ENCODE measurements at regions of chr9 and their contacts with region 1.

Region 1: DNA sequence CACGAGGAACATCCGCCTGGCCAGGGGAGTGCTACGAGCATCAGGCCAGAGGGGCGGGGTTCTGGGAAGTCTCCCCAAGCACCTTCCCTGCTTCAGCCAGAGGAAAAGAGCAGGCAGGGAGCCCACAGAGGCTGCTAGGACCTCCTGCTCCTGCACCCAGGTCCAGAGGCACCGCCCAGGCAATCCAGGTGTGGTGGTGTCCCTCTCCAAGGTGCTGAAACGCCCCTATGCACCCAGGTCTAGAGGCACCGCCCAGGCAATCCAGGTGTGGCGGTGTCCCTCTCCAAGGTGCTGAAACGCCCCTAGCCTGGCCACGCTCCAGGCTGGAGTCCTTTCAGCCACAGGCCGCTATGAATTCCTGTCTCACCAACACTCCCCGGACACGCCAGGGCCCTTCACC is 10.7 kb upstream of the UBAC1 start:
- DNase-seq: peak in 1 of 2 experiments; percentile 38
- ATAC-seq: peak; percentile 26 to 30; a peak in 4 of 6 replicates
- H3K4me3 ChIP-seq: no peak overlapping the region
- H3K27ac ChIP-seq: no peak overlapping the region
- H3K4me1 ChIP-seq: peaks cover 9% of the 10 kb centered on the region; the same call in 1 of the 3 replicates
- CTCF ChIP-seq: no peak
- EP300 ChIP-seq: no peak
- POLR2A ChIP-seq: no peak
- RAD21 ChIP-seq: no peak

Region 2: GRCh38 chr9:135574331-135574730 is 397.6 kb before region 1 on chr9:
- CTCF ChIA-PET with region 1: no interaction called
- POLR2A ChIA-PET with region 1: no interaction called
- DNase-seq: no peak
- ATAC-seq: no peak
- H3K4me3 ChIP-seq: no peak overlapping the region
- H3K27ac ChIP-seq: no peak overlapping the region
- H3K4me1 ChIP-seq: no peaks in the 10 kb centered on the region
- CTCF ChIP-seq: no peak
- EP300 ChIP-seq: no peak
- POLR2A ChIP-seq: no peak
- RAD21 ChIP-seq: no peak

Region 3: DNA sequence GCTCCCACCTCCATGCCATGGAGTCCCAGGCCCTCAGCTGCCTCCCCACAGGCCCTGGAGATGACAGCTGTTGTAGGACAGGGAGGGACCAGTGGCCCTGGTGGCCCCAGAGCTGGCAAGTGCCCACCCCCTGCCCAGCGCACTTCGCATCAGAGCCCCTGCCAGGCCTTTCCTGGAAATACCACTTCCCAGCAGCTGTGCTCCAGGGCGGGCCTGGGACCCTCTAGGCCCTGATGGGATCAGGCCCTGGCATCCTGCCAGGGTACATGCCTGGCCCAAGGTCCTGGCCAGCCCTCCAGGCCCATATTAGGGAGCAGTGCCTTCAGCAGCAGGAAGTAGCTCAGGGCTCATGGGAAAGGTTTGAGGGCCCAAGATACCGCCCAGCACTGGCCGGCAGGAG is 267.4 kb before region 1 on chr9:
- CTCF ChIA-PET with region 1: no interaction called
- POLR2A ChIA-PET with region 1: no interaction called
- DNase-seq: no peak
- ATAC-seq: no peak
- H3K4me3 ChIP-seq: no peak overlapping the region
- H3K27ac ChIP-seq: no peak overlapping the region
- H3K4me1 ChIP-seq: peaks cover 9% of the 10 kb centered on the region; the same call in 2 of the 3 replicates
- CTCF ChIP-seq: no peak
- EP300 ChIP-seq: no peak
- POLR2A ChIP-seq: no peak
- RAD21 ChIP-seq: no peak

Region 4: GRCh38 chr9:135743546-135744332 is 228.2 kb before region 1 on chr9:
- CTCF ChIA-PET with region 1: no interaction called
- POLR2A ChIA-PET with region 1: no interaction called
- DNase-seq: no peak
- ATAC-seq: no peak
- H3K4me3 ChIP-seq: no peak overlapping the region
- H3K27ac ChIP-seq: no peak overlapping the region
- H3K4me1 ChIP-seq: no peaks in the 10 kb centered on the region
- CTCF ChIP-seq: no peak
- EP300 ChIP-seq: no peak
- POLR2A ChIP-seq: no peak
- RAD21 ChIP-seq: no peak

Region 5: GRCh38 chr9:135986605-135987004 is 14.7 kb after region 1 on chr9:
- CTCF ChIA-PET with region 1: interaction called, 22 read pairs
- POLR2A ChIA-PET with region 1: interaction called, 5 read pairs
- DNase-seq: no peak
- ATAC-seq: no peak
- H3K4me3 ChIP-seq: no peak overlapping the region
- H3K27ac ChIP-seq: no peak overlapping the region
- H3K4me1 ChIP-seq: 0 out of 3 replicates have a peak, but pooled peaks cover 8% of the 10 kb centered on the region
- CTCF ChIP-seq: no peak
- EP300 ChIP-seq: no peak
- POLR2A ChIP-seq: no peak
- RAD21 ChIP-seq: no peak

Region 6: GRCh38 chr9:136051517-136052432 is 79.9 kb after region 1 on chr9:
- CTCF ChIA-PET with region 1: interaction called, 44 read pairs
- POLR2A ChIA-PET with region 1: interaction called, 3 read pairs
- DNase-seq: peak; percentile 90 to 98
- ATAC-seq: peak; percentile 70 to 84
- H3K4me3 ChIP-seq: peak overlapping the region; percentile 84
- H3K27ac ChIP-seq: peak overlapping the region; percentile 99
- H3K4me1 ChIP-seq: peaks cover 73% of the 10 kb centered on the region
- CTCF ChIP-seq: no peak
- EP300 ChIP-seq: peak; percentile 31 to 51; a peak in 2 of 5 replicates
- POLR2A ChIP-seq: peak; percentile 20; the same call in 1 of the 2 replicates
- RAD21 ChIP-seq: peak in 1 of 2 experiments; percentile 11; a peak in 2 of 5 replicates

Region 7: GRCh38 chr9:136093995-136094881 is 122.3 kb after region 1 on chr9:
- CTCF ChIA-PET with region 1: interaction called, 33 read pairs
- POLR2A ChIA-PET with region 1: no interaction called
- DNase-seq: peak; percentile 81 to 90
- ATAC-seq: peak; percentile 61 to 81
- H3K4me3 ChIP-seq: peak overlapping the region; percentile 79
- H3K27ac ChIP-seq: peak overlapping the region; percentile 92 to 94
- H3K4me1 ChIP-seq: peaks cover 54% of the 10 kb centered on the region
- CTCF ChIP-seq: no peak
- EP300 ChIP-seq: no peak
- POLR2A ChIP-seq: no peak
- RAD21 ChIP-seq: no peak

Region 8: GRCh38 chr9:136127313-136127712 is 155.4 kb after region 1 on chr9:
- CTCF ChIA-PET with region 1: interaction called, 220 read pairs
- POLR2A ChIA-PET with region 1: no interaction called
- DNase-seq: no peak
- ATAC-seq: no peak
- H3K4me3 ChIP-seq: no peak overlapping the region
- H3K27ac ChIP-seq: no peak overlapping the region
- H3K4me1 ChIP-seq: peaks cover 2% of the 10 kb centered on the region; the same call in 1 of the 3 replicates
- CTCF ChIP-seq: no peak
- EP300 ChIP-seq: no peak
- POLR2A ChIP-seq: no peak
- RAD21 ChIP-seq: no peak